Transverse colon (tissue), 4 donors: ENCODE measurements at regions of chr7 and their contacts with region 1.

Region 1: GRCh38 chr7:87416682-87417587 is 58.5 kb downstream of the ABCB4 start:
- DNase-seq: peak; percentile 63
- H3K4me3 ChIP-seq: no peak overlapping the region
- H3K27ac ChIP-seq: no peak overlapping the region
- H3K4me1 ChIP-seq: no peaks in the 10 kb centered on the region
- H3K27me3 ChIP-seq: no peaks in the 10 kb centered on the region
- CTCF ChIP-seq: peak; percentile 62 to 80 (median 70)
- EP300 ChIP-seq: no peak
- POLR2A ChIP-seq: no peak

Region 2: DNA sequence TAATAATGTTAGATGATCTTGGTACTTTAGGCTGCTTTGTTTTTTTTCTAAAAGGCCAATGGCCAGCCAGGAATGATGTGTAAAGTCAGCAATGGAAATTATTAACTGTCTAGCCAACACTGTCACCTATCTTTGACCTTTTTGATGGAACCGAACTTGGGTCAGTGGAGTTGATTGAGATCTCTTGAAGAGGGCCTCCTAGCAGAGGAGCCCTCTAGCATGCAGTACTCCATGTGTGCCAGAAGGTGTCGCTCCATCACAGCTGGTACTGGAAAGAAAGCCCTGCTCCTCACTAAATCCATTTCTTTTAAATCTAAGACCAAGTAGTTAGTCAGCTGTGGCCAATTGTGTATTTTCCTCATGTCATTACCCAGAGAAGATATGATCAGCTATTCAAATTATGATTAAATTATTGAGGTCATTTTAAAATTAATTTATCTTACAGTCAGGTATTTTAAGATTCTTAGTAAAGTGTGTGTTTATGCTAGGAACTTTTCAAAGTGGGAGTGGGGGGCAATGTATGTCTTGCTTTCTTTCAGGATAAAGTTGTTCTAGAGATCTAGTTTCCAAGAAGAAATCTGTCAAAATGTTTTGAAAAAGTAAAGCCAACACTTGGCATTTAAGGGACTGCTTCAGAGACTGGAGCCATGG is 104.6 kb before region 1 on chr7:
- in situ Hi-C with region 1: loop called (anchors 5 kb)
- intact Hi-C with region 1: loop called (anchors 2 kb)
- DNase-seq: peak; percentile 63
- H3K4me3 ChIP-seq: no peak overlapping the region
- H3K27ac ChIP-seq: no peak overlapping the region
- H3K4me1 ChIP-seq: peaks cover 0 to 7% (median 2%) of the 10 kb centered on the region in 4 donors
- H3K27me3 ChIP-seq: no peaks in the 10 kb centered on the region
- CTCF ChIP-seq: peak; percentile 95 to 98 (median 97)
- EP300 ChIP-seq: no peak
- POLR2A ChIP-seq: no peak

Region 3: DNA sequence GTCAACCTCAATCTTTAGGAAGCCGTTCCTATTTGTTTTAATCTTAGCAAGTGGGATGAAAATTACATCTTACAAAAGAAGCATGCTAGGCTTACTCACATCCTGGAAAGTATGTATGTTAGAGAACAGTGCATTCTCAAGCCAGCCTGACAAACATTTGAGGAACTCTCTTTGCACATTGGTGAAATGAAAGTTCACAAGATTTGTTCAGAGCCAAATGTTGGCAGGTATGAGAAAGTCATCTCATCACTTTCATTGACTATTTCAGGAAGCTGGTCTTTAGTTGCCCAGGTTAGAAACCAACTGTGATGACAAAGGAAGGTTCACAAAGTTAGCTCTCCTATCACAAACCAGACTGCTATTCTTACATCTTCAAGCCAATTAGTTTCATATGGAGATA is 126.7 kb after region 1 on chr7:
- in situ Hi-C with region 1: no loop called
- intact Hi-C with region 1: no loop called
- DNase-seq: no peak
- H3K4me3 ChIP-seq: no peak overlapping the region
- H3K27ac ChIP-seq: no peak overlapping the region
- H3K4me1 ChIP-seq: no peaks in the 10 kb centered on the region
- H3K27me3 ChIP-seq: no peaks in the 10 kb centered on the region
- CTCF ChIP-seq: no peak
- EP300 ChIP-seq: no peak
- POLR2A ChIP-seq: no peak